Heart left ventricle (tissue), 16 donors: ENCODE measurements at regions of chr20 and their contacts with region 1.

Region 1: DNA sequence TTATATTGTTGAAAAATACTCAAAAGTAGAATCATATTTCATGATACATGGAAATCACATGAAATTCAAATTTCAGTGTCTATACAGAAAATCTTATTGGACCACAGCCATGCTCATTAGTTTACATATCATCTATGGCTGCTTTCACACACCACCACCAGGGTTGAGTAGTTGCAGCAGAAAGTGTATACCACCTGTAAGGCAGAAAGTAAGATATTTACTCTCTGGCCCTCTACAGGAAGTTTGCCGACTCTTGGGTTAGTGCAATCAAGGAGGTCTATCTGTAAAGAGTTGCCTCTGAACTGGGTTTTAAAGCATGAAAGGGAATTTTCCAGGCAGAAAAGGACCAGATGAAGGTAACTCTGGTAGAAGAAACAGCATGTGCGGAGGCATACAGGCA is 432.3 kb downstream of the DHX35 start:
- DNase-seq: no peak
- ATAC-seq: no peak
- H3K4me3 ChIP-seq: no peak overlapping the region
- H3K27ac ChIP-seq: no peak overlapping the region
- H3K4me1 ChIP-seq: no peaks in the 10 kb centered on the region
- H3K27me3 ChIP-seq: no peaks in the 10 kb centered on the region
- CTCF ChIP-seq: no peak
- POLR2A ChIP-seq: no peak

Region 2: GRCh38 chr20:39364320-39364719 is 30.1 kb before region 1 on chr20:
- intact Hi-C with region 1: loop called in 1 of 10 experiments (anchors 2 kb)
- DNase-seq: no peak
- ATAC-seq: no peak
- H3K4me3 ChIP-seq: no peak overlapping the region
- H3K27ac ChIP-seq: no peak overlapping the region
- H3K4me1 ChIP-seq: no peaks in the 10 kb centered on the region
- H3K27me3 ChIP-seq: no peaks in the 10 kb centered on the region
- CTCF ChIP-seq: no peak
- POLR2A ChIP-seq: no peak

Region 3: GRCh38 chr20:39645131-39645717 is 250.8 kb after region 1 on chr20:
- intact Hi-C with region 1: no loop called
- DNase-seq: peak in 2 of 5 donors; percentile 31 to 37
- ATAC-seq: peak in 1 of 4 donors; percentile 11
- H3K4me3 ChIP-seq: no peak overlapping the region
- H3K27ac ChIP-seq: no peak overlapping the region
- H3K4me1 ChIP-seq: peaks cover 0 to 11% (median 0%) of the 10 kb centered on the region in 12 donors
- H3K27me3 ChIP-seq: peaks cover 0 to 19% (median 0%) of the 10 kb centered on the region in 9 donors
- CTCF ChIP-seq: no peak
- POLR2A ChIP-seq: no peak